Breast epithelium (tissue), 4 donors: ENCODE measurements at regions of chr18 and their contacts with region 1.

Region 1: DNA sequence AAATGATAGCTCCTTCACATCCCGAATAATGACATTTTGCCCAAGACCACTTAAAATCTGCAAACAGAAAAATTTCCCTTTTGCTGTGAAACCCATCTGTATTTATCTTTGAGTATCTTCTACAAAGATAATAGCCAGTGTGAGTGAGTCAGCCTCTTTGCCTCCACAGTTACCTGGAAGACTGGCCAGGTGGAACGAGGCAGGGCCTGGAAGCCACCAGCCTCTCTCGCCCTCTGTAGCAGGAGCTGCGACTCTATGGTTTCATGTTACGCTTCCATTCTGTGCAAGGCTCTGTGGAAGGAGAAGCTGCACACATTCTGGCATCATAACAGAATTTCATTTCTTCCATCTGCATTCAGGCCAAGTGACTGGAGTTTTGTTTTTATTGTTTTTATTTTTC is 9.6 kb downstream of the ELP2 start:
- DNase-seq: no peak
- H3K4me3 ChIP-seq: no peak overlapping the region
- H3K27ac ChIP-seq: no peak overlapping the region
- H3K4me1 ChIP-seq: no peaks in the 10 kb centered on the region
- H3K27me3 ChIP-seq: no peaks in the 10 kb centered on the region
- CTCF ChIP-seq: no peak
- POLR2A ChIP-seq: no peak

Region 2: DNA sequence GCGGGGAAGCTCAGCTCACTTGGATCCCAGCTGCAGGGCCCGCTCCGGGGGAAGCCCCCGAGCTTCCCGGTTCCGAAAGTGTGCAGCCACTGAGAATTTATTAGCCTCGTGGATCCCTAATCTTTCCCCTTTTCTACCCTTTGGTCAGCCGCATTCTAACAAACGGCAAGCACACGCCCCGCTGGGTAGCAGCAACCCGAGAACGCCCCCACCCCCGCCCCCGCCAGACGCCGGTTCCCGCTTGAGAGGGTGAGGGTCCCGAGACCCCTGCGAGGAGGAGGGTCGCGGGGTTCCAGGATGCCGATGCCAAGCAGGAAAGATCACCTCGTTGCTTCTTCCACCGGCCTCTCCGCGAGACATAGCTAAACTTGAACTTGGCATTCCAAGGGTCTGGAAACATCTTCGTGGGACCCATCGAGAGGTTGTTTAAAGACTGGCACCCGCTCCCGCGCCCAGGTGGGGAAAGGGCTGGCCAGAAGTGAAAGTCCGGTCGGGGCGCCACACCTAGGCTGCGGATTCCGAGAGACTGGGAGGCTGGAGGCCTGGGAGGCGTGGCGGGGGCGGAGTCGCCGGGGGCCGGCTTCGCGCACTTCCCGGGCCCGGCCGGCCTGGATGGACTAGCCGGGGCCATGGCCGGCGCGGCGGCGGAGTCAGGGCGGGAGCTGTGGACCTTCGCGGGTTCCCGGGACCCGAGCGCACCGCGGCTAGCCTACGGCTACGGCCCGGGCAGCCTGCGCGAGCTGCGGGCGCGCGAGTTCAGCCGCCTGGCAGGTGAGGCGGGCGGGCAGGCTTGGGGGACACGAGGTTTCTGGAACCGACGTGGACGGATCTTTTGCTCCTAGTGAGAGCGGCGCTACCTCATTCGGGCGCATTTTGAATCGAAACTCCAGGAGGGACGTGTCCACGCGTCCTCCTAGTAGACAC is 47.9 kb after region 1 on chr18 and contains the start of gene MOCOS:
- intact Hi-C with region 1: loop called (anchors 1 kb)
- DNase-seq: peak; percentile 68 to 82
- H3K4me3 ChIP-seq: peak within 1 kb of the TSS; percentile 52 to 97 (median 73)
- H3K27ac ChIP-seq: peak within 1 kb of the TSS; percentile 40 to 68
- H3K4me1 ChIP-seq: no peaks in the 10 kb centered on the region
- H3K27me3 ChIP-seq: no peaks in the 10 kb centered on the region
- CTCF ChIP-seq: no peak
- POLR2A ChIP-seq: no peak
- total RNA-seq, gene MOCOS: 5.2 to 9.7 (median 9.1) TPM